Adrenal gland (tissue), 19 donors: ENCODE measurements at regions of chr2 and their contacts with region 1.

Region 1: GRCh38 chr2:202541137-202541536 is 93.6 kb upstream of the FAM117B start:
- DNase-seq: peak in 5 of 7 donors; percentile 31 to 48 (median 46)
- H3K4me3 ChIP-seq: no peak overlapping the region
- H3K27ac ChIP-seq: no peak overlapping the region
- H3K4me1 ChIP-seq: peaks cover 0 to 23% of the 10 kb centered on the region in 2 donors
- H3K27me3 ChIP-seq: no peaks in the 10 kb centered on the region
- CTCF ChIP-seq: no peak
- POLR2A ChIP-seq: no peak

Region 2: DNA sequence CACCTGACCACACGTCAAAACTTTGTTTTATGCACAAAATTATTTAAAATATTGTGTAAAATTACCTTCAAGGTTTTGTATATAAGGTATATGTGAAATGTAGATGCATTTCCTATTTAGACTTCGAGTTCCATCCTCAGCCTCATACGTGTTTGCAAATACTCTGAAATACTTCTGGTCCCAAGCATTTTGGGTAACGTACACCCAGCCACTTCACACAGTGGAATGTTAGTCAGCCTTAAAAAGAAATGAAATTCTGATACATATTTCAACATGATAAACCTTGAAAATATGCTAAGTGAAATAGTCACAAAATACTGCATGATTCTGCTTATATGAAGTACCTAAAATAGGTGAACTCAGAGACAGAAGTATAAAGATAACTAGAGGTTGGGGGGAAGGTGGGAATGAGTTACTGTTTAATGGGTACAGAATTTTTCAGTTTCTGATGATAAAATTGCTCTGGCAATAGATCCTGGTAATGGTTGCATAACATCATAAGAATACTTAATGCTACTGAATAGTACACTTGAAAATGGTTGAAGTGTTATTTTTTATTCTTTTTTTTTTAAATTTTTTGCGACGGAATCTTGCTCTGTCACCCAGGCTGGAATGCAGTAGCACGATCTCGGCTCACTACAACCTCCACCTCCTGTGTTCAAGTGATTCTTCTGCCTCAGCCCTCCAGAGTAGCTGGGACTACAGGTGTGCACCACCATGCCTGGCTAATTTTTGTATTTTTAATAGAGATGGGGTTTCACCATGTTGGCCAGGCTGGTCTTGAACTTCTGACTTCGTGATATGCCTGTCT is 251.5 kb before region 1 on chr2:
- intact Hi-C with region 1: loop called in 1 of 2 experiments (anchors 10 kb)
- DNase-seq: no peak
- H3K4me3 ChIP-seq: no peak overlapping the region
- H3K27ac ChIP-seq: no peak overlapping the region
- H3K4me1 ChIP-seq: no peaks in the 10 kb centered on the region
- H3K27me3 ChIP-seq: no peaks in the 10 kb centered on the region
- CTCF ChIP-seq: no peak
- POLR2A ChIP-seq: no peak

Region 3: GRCh38 chr2:202634556-202635427 is 93.7 kb after region 1 on chr2 and contains the start of gene FAM117B:
- intact Hi-C with region 1: no loop called
- DNase-seq: peak; percentile 98 to 100 (median 99)
- H3K4me3 ChIP-seq: peak within 1 kb of the TSS; percentile 94 to 99 (median 98)
- H3K27ac ChIP-seq: peak within 1 kb of the TSS; percentile 65 to 93 (median 89)
- H3K4me1 ChIP-seq: peaks cover 13 to 42% of the 10 kb centered on the region in 2 donors
- H3K27me3 ChIP-seq: no peaks in the 10 kb centered on the region
- CTCF ChIP-seq: no peak
- POLR2A ChIP-seq: peak; percentile 26 to 95
- total RNA-seq, gene FAM117B: 10.5 to 48.2 (median 21.8) TPM

Region 4: GRCh38 chr2:202847693-202848524 is 306.8 kb after region 1 on chr2:
- intact Hi-C with region 1: no loop called
- DNase-seq: no peak
- H3K4me3 ChIP-seq: no peak overlapping the region
- H3K27ac ChIP-seq: no peak overlapping the region
- H3K4me1 ChIP-seq: no peaks in the 10 kb centered on the region
- H3K27me3 ChIP-seq: no peaks in the 10 kb centered on the region
- CTCF ChIP-seq: no peak
- POLR2A ChIP-seq: no peak